Right ventricle myocardium inferior (tissue), 1 donor: ENCODE measurements at regions of chr5 and their contacts with region 1.

Region 1: GRCh38 chr5:154972476-154973080 is 31.7 kb downstream of the MRPL22 start:
- DNase-seq: no peak
- ATAC-seq: peak; percentile 52

Region 2: GRCh38 chr5:155040984-155041653 is 68.5 kb after region 1 on chr5:
- intact Hi-C with region 1: no loop called
- DNase-seq: no peak
- ATAC-seq: no peak

Region 3: DNA sequence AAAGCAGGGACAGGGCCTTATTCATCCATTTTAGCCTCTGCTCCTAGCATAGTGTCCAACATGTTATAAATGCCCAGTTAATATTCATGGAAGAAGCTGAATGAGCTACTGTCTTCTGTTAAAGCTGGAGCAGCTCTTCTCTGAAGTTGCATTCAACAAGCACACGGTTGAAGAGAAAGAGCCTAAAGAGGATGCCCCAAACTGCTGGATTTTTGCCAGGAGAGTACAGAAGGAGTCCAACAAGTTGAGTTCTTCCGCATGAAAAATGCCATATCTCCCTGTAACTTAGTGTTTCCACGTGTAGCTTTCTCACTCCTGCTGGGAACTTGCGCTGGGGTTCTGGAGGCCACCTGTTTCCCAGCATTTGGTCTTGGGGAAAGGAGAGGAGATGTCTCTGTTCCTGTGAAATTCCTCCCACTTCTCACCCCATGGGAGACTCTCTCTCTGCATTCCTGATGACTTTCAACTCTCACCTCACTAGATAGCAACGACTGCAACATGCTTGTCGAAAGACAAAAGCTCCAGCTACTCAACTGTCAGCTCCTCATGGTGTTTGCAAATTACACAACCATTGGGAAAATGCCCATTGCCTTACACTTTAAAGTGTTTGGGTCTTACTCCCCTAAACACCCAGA is 163.8 kb after region 1 on chr5:
- intact Hi-C with region 1: loop called (anchors 2 kb)
- DNase-seq: no peak
- ATAC-seq: peak; percentile 75

Region 4: DNA sequence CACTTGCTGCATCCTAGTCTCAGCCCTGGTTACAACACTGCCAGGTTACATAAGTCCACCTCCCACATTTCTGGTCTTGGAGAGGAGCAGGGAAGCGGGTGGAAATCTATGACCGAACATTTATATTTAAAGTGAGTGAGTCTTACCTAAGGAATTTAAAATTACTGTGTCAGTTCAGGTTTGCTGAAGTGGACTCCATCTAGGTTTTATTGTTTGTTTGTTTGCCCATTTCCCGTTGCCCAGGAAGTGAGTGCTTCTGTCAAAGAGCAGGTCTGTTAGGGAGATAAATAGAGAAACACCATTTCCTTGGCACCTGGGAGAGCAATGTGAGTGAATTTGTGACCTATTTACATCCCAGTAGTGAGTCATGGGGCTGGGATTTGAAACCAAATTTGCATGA is 220.5 kb after region 1 on chr5:
- intact Hi-C with region 1: loop called (anchors 1 kb)
- DNase-seq: no peak
- ATAC-seq: peak; percentile 85

Region 5: GRCh38 chr5:155263381-155263780 is 290.8 kb after region 1 on chr5:
- intact Hi-C with region 1: loop called (anchors 2 kb)
- DNase-seq: no peak
- ATAC-seq: no peak